Esophagus squamous epithelium (tissue), 5 donors: ENCODE measurements at regions of chr7 and their contacts with region 1.

Region 1: GRCh38 chr7:30556840-30557239 is 37.8 kb upstream of the GARS1 start:
- DNase-seq: no peak
- H3K4me3 ChIP-seq: no peak overlapping the region
- H3K27ac ChIP-seq: peak overlapping the region in 2 of 4 donors; percentile 35 to 46
- H3K4me1 ChIP-seq: peaks cover 0 to 36% (median 0%) of the 10 kb centered on the region in 3 donors
- H3K27me3 ChIP-seq: no peaks in the 10 kb centered on the region
- CTCF ChIP-seq: no peak
- POLR2A ChIP-seq: no peak

Region 2: GRCh38 chr7:30276203-30276900 is 280.5 kb before region 1 on chr7:
- intact Hi-C with region 1: loop called (anchors 10 kb)
- DNase-seq: no peak
- H3K4me3 ChIP-seq: no peak overlapping the region
- H3K27ac ChIP-seq: no peak overlapping the region
- H3K4me1 ChIP-seq: peaks cover 8 to 42% (median 13%) of the 10 kb centered on the region in 3 donors
- H3K27me3 ChIP-seq: no peaks in the 10 kb centered on the region
- CTCF ChIP-seq: peak in 5 of 6 experiments; percentile 33 to 69 (median 49)
- POLR2A ChIP-seq: no peak

Region 3: DNA sequence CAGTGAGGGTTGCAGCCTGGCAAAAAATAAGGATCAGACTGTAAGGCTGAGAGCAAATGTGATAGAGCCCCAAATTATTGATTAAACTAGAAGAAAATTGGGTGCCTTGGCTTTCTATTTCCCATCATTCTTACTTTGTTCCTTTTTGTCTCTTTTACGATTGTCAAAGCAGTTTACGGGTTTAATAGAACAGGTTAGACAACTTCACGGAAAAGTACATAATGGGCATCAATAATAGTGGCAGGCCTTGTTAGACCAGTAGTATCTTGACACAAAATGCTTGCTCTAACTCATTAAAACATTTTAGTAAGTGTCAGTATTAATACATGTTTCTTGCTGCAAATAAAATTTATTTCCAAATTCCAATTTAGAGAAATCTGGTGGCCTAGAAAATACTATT is 37.7 kb before region 1 on chr7:
- intact Hi-C with region 1: loop called (anchors 5 kb)
- DNase-seq: no peak
- H3K4me3 ChIP-seq: no peak overlapping the region
- H3K27ac ChIP-seq: peak overlapping the region in 3 of 4 donors; percentile 63 to 83 (median 80)
- H3K4me1 ChIP-seq: peaks cover 6 to 52% (median 13%) of the 10 kb centered on the region in 3 donors
- H3K27me3 ChIP-seq: no peaks in the 10 kb centered on the region
- CTCF ChIP-seq: no peak
- POLR2A ChIP-seq: no peak